ENCODE measurements at regions of chr11 and their contacts with region 1.

Region 1: DNA sequence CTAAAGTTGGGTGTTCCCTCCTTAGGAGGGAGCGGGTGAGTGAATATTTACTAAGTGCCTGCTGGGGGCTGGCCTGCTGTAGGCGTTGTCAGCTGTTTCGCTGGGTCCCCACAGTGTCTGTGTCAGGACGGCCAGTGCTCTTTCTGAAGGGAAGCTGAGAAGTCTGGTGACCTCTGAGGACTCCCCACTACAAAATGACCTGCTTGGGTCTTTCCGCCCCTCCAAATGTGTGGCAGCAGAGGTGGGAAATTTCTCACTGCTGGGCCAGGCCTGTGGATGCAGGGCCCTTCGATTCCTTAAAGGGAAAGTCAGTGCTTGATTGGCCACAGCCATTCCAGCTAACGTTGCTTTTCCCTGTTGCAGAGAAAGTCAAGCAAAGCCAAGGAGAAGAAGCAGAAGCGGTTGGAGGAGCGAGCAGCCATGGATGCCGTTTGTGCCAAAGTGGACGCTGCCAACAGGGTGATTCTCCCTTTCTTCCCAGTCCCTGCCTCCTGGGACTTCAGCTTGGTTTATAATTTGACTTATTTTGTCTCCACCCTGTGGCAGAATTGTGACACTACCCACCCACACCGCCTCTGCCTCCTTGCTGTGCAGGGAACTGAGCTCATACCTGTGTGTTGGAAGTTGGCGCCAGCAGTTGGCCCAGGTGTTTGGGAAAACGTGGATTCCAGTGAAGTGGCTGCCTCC is 6.8 kb downstream of the NAA40 start:
- DNase-seq: peak; percentile 87 to 89
- H3K4me3 ChIP-seq: no peak overlapping the region
- H3K27ac ChIP-seq: peak overlapping the region; percentile 27 to 48 (median 28)
- H3K4me1 ChIP-seq: peaks cover 10% of the 10 kb centered on the region in 2 donors
- H3K27me3 ChIP-seq: no peaks in the 10 kb centered on the region
- CTCF ChIP-seq: peak; percentile 39 to 97 (median 85)
- POLR2A ChIP-seq: no peak

Region 2: DNA sequence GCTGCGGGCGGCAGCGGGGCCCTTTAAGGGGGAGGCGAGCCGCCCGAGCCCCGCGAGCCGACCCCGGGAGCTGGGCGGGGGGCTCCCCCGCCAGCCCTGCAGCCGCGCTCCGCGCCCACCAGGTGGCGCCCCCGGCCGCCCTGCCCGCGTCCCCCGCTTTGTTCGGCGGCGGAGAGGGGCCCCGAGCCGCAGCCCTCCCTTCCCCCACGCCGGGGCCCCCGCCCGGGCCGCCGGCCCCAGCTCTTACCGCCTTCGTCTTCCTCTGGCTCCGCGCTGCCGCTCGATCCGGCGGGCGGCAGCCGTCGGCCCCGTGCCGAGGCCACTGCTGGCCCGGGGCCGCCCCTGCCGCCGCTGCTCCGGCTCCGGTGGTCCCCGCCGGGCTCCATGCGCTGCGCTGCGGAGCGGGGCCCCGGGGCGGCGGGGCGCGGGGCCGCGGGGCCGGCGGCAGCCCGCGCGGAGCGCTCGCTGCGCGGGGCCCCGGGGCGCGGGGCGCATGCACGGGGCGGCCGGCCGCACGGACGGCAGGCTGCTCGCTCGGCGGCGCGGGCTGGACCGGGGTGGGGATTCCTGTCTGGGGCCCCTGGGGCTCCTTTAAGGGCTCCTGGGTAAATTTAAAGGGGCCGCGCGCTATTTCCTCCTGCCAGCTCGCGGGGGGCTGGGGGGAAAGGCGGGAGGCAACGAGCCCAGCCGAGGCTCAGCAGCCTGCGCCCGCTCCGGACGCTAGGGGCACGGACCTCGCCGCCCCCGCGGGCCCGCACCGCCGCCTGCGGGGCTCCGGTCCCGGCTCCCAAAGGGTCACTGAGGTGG is 177.2 kb before region 1 on chr11 and contains the start of gene ZFTA:
- intact Hi-C with region 1: loop called (anchors 5 kb)
- DNase-seq: peak; percentile 70 to 72
- H3K4me3 ChIP-seq: peak within 1 kb of the TSS; percentile 53 to 87 (median 81)
- H3K27ac ChIP-seq: peak within 1 kb of the TSS; percentile 82 to 92 (median 83)
- H3K4me1 ChIP-seq: peaks cover 23 to 40% of the 10 kb centered on the region in 2 donors
- H3K27me3 ChIP-seq: no peaks in the 10 kb centered on the region
- CTCF ChIP-seq: peak in 4 of 6 experiments; percentile 45 to 99 (median 88)
- POLR2A ChIP-seq: no peak
- total RNA-seq, gene ZFTA: 14.7 to 29.7 (median 18.6) TPM

Region 3: GRCh38 chr11:63838678-63839507 is 106.7 kb before region 1 on chr11 and contains the start of gene MARK2:
- intact Hi-C with region 1: loop called (anchors 2 kb)
- DNase-seq: peak; percentile 98
- H3K4me3 ChIP-seq: peak within 1 kb of the TSS; percentile 45 to 87 (median 71)
- H3K27ac ChIP-seq: peak within 1 kb of the TSS; percentile 84 to 92 (median 88)
- H3K4me1 ChIP-seq: peaks cover 47 to 48% of the 10 kb centered on the region in 2 donors
- H3K27me3 ChIP-seq: no peaks in the 10 kb centered on the region
- CTCF ChIP-seq: no peak
- POLR2A ChIP-seq: peak; percentile 26 to 89
- total RNA-seq, gene MARK2: 28.2 to 57.7 (median 48.6) TPM